ENCODE measurements at regions of chr13 and their contacts with region 1.

Region 1: GRCh38 chr13:51452361-51453206 is at the start of gene INTS6:
- DNase-seq: peak; percentile 99
- ATAC-seq: peak; percentile 92
- H3K4me3 Mint-ChIP-seq: peak within 1 kb of the TSS; percentile 83
- H3K27ac Mint-ChIP-seq: peak within 1 kb of the TSS; percentile 96
- H3K4me1 Mint-ChIP-seq: peaks cover 27% of the 10 kb centered on the region
- H3K27me3 Mint-ChIP-seq: no peaks in the 10 kb centered on the region; the same call in 1 of the 2 replicates
- CTCF ChIP-seq: no peak
- total RNA-seq, gene INTS6: 27.2 to 40.4 TPM (median 35.7 TPM) in 3 replicates

Region 2: DNA sequence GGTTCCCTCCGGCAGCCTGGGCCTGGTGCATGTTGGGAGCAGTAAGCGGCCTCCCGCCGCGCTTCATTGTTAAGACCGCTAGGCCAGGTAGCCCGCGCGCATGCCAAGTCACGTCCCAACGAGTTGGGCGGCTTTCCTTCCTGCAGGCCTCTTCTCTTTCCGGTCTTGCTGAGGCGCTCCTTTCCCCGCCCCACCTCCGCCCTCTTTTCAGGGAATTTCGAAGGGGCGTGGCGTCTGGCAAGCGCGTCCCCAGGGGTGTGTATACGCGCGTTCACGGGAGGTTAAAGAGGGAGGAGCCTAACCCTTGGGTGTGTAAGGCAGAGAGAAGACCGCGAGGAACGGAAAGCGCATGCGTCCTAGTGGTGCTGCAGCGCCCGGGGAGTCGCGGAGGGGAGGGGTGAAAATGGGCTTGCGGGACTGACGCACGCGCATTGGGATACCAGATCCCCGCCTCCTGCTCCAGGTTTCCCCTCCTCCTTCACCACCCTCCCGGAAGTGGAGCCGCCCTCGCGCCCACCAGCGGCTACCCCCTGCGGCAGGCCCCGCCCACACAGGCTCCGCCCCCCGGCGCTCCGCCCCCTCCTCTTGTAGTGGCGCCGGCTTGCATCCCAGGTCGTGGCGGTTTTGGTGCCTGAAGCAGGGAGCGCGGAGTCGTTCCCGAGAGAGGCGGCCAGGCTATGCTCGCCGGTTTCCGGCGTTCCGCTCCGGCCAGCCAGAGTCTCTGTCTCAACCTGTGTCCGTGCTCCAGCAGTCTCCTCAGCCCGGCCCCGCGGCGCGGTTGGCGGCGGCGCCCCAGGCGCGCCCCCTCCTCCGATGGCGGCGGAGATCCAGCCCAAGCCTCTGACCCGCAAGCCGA is 131.5 kb after region 1 on chr13 and contains the start of gene WDFY2:
- CTCF ChIA-PET with region 1: interaction called, 5 read pairs
- POLR2A ChIA-PET with region 1: interaction called, 11 read pairs
- DNase-seq: peak; percentile 99
- ATAC-seq: peak; percentile 85
- H3K4me3 Mint-ChIP-seq: peak within 1 kb of the TSS; percentile 93
- H3K27ac Mint-ChIP-seq: peak within 1 kb of the TSS; percentile 98
- H3K4me1 Mint-ChIP-seq: peaks cover 44% of the 10 kb centered on the region
- H3K27me3 Mint-ChIP-seq: no peaks in the 10 kb centered on the region
- CTCF ChIP-seq: no peak
- total RNA-seq, gene WDFY2: 22.6 to 25.7 TPM (median 23.7 TPM) in 3 replicates